ENCODE measurements at regions of chr3 and their contacts with region 1.

Region 1: GRCh38 chr3:155701882-155702465 is 42.9 kb downstream of the PLCH1 start:
- H3K4me3 ChIP-seq: no peak overlapping the region
- H3K27ac ChIP-seq: no peak overlapping the region
- H3K4me1 ChIP-seq: no peaks in the 10 kb centered on the region
- CTCF ChIP-seq: peak; percentile 12; the same call in 1 of the 2 replicates

Region 2: GRCh38 chr3:155352900-155353490 is 349.0 kb before region 1 on chr3:
- CTCF ChIA-PET with region 1: interaction called, 50 read pairs
- POLR2A ChIA-PET with region 1: no interaction called
- H3K4me3 ChIP-seq: no peak overlapping the region
- H3K27ac ChIP-seq: no peak overlapping the region
- H3K4me1 ChIP-seq: no peaks in the 10 kb centered on the region
- CTCF ChIP-seq: 0 out of 2 replicates have a peak, but pooled peaks have one; percentile 8

Region 3: DNA sequence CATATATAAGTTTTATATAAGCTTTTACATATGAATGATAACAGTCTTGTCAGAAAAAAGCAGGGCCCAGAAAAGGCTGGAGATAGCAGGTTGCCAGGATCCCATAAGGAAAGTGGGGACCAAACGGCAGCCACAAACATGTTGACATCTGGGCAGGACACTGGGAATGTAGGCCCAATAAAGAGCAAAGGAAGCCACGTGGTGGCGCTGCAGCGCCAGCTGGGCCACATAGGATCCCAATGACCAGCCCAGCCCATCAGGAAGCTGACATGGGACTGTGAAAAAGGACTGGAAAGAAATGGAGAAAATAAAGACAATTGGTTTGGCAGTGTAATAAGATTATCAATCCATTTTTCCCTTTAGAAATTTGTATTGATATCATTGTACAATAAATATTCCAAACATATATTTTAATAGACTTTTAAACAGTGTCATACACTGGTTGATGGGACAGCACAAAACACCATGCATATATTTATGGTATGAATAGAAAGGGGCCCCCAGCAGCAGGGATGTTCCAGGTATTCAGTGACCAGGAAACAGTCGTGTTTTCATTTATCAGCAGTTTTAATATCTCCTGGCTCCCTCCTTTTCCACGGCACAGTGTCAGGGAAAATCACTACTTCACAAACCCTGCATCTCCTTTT is 319.5 kb before region 1 on chr3:
- CTCF ChIA-PET with region 1: interaction called, 68 read pairs
- POLR2A ChIA-PET with region 1: no interaction called
- H3K4me3 ChIP-seq: no peak overlapping the region
- H3K27ac ChIP-seq: no peak overlapping the region
- H3K4me1 ChIP-seq: no peaks in the 10 kb centered on the region
- CTCF ChIP-seq: no peak

Region 4: GRCh38 chr3:155673421-155673820 is 28.6 kb before region 1 on chr3:
- CTCF ChIA-PET with region 1: interaction called, 10 read pairs
- POLR2A ChIA-PET with region 1: no interaction called
- H3K4me3 ChIP-seq: no peak overlapping the region
- H3K27ac ChIP-seq: no peak overlapping the region
- H3K4me1 ChIP-seq: no peaks in the 10 kb centered on the region; the same call in 1 of the 2 replicates
- CTCF ChIP-seq: no peak

Region 5: GRCh38 chr3:155712008-155712407 is 10.0 kb after region 1 on chr3:
- CTCF ChIA-PET with region 1: interaction called, 16 read pairs
- POLR2A ChIA-PET with region 1: no interaction called
- H3K4me3 ChIP-seq: no peak overlapping the region
- H3K27ac ChIP-seq: no peak overlapping the region
- H3K4me1 ChIP-seq: no peaks in the 10 kb centered on the region
- CTCF ChIP-seq: no peak

Region 6: GRCh38 chr3:155815030-155815429 is 113.1 kb after region 1 on chr3:
- CTCF ChIA-PET with region 1: no interaction called
- POLR2A ChIA-PET with region 1: no interaction called
- H3K4me3 ChIP-seq: no peak overlapping the region
- H3K27ac ChIP-seq: no peak overlapping the region
- H3K4me1 ChIP-seq: no peaks in the 10 kb centered on the region
- CTCF ChIP-seq: no peak